T-cell (primary cell): ENCODE measurements at regions of chr5 and their contacts with region 1.

Region 1: DNA sequence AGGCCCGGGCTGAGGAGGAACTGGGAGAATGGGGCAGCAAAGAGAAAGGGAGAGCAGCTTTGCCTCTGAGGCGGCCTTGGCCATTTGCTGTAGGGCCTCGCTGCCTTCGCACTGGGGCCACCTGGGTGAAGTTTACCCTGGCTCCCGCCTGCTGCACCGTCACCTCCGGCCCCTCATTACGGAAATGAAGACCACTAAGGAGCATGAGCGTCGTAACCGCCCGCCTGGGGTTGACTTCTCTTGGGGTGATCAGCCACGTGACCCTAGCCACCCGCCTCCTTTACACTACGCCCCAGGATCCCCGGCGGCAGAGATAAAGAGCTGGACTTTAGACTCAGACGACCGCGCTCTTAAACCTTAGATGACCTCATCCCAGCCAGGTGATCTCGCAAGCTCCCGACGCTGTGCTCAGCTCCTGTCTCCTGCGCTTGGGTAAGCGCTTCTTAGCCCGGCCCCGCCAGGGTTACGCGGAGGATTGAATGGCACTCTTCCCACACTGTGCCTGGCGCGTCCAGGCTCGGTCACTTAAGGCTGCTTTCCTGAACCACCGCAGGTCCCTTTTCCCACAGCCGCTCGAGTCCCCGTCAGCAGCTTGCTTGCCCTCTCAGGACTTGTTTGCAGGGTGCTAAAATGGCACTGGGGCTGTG is 107.9 kb upstream of the LARP1 start:
- DNase-seq: peak in 23 of 35 experiments; percentile 1 to 41 (median 9)
- ATAC-seq: peak; percentile 52 to 76 (median 70)
- H3K4me3 ChIP-seq: peak overlapping the region; percentile 39 to 86
- H3K4me3 Mint-ChIP-seq: peak overlapping the region; percentile 71 to 78 (median 77)
- H3K27ac ChIP-seq: no peak overlapping the region
- H3K27ac Mint-ChIP-seq: peak overlapping the region in 1 of 2 donors; percentile 34
- H3K4me1 ChIP-seq: peaks cover 0 to 15% of the 10 kb centered on the region in 2 experiments
- H3K4me1 Mint-ChIP-seq: peaks cover 15 to 18% (median 18%) of the 10 kb centered on the region in 3 donors
- H3K27me3 ChIP-seq: peaks cover 2 to 26% of the 10 kb centered on the region in 2 experiments
- H3K27me3 Mint-ChIP-seq: peaks cover 19 to 32% of the 10 kb centered on the region in 2 donors

Region 2: DNA sequence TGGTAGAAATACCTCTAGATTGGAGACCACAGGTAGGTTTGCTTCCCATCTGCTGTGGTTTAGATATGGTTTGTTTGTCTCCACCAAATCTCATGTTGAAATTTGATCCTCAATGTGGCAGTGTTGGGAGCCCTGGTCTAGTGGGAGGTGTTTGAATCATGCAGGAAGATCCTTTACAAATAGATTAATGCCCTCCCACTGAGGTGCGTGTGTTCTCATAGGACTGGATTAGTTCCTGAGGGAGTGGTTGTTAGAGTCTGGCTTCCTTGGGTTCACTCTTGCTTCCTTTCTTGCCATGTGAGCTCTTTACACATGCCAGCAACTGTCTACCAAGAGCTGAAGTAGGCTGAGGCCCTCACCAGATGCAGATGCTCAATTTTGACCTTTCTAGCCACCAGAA is 1547.9 kb before region 1 on chr5:
- CTCF ChIA-PET with region 1: no interaction called
- POLR2A ChIA-PET with region 1: no interaction called
- DNase-seq: no peak
- ATAC-seq: no peak
- H3K4me3 ChIP-seq: no peak overlapping the region
- H3K4me3 Mint-ChIP-seq: no peak overlapping the region
- H3K27ac ChIP-seq: no peak overlapping the region
- H3K27ac Mint-ChIP-seq: no peak overlapping the region
- H3K4me1 ChIP-seq: no peaks in the 10 kb centered on the region
- H3K4me1 Mint-ChIP-seq: no peaks in the 10 kb centered on the region
- H3K27me3 ChIP-seq: no peaks in the 10 kb centered on the region
- H3K27me3 Mint-ChIP-seq: no peaks in the 10 kb centered on the region

Region 3: GRCh38 chr5:154368041-154368800 is 279.0 kb before region 1 on chr5:
- CTCF ChIA-PET with region 1: no interaction called
- POLR2A ChIA-PET with region 1: no interaction called
- DNase-seq: no peak
- ATAC-seq: no peak
- H3K4me3 ChIP-seq: no peak overlapping the region
- H3K4me3 Mint-ChIP-seq: no peak overlapping the region
- H3K27ac ChIP-seq: no peak overlapping the region
- H3K27ac Mint-ChIP-seq: no peak overlapping the region
- H3K4me1 ChIP-seq: no peaks in the 10 kb centered on the region
- H3K4me1 Mint-ChIP-seq: no peaks in the 10 kb centered on the region
- H3K27me3 ChIP-seq: no peaks in the 10 kb centered on the region
- H3K27me3 Mint-ChIP-seq: no peaks in the 10 kb centered on the region

Region 4: DNA sequence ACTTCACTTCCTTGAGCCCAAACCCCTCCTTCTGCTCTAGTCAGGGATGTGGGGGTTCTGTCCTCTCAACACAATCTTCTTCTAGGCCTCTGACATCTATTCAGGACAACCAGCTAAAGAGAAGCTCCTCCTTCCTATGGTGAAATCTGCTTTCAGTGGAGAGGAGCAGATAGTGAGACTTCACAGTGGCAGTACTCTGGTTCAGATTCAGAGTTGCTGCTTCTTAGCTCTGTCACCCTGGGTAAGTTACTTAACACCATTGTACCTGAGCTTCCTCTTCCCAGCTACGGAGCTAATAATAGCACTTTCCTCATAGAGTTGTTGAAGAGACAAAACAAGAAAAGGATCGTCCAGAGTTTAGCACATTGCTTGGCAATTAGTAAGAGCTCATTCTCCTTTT is 30.7 kb after region 1 on chr5:
- CTCF ChIA-PET with region 1: interaction called, 8 to 10 read pairs
- POLR2A ChIA-PET with region 1: no interaction called
- DNase-seq: no peak
- ATAC-seq: no peak
- H3K4me3 ChIP-seq: no peak overlapping the region
- H3K4me3 Mint-ChIP-seq: no peak overlapping the region
- H3K27ac ChIP-seq: no peak overlapping the region
- H3K27ac Mint-ChIP-seq: no peak overlapping the region
- H3K4me1 ChIP-seq: peaks cover 0 to 7% of the 10 kb centered on the region in 2 experiments
- H3K4me1 Mint-ChIP-seq: peaks cover 0 to 3% (median 1%) of the 10 kb centered on the region in 3 donors
- H3K27me3 ChIP-seq: no peaks in the 10 kb centered on the region
- H3K27me3 Mint-ChIP-seq: no peaks in the 10 kb centered on the region

Region 5: DNA sequence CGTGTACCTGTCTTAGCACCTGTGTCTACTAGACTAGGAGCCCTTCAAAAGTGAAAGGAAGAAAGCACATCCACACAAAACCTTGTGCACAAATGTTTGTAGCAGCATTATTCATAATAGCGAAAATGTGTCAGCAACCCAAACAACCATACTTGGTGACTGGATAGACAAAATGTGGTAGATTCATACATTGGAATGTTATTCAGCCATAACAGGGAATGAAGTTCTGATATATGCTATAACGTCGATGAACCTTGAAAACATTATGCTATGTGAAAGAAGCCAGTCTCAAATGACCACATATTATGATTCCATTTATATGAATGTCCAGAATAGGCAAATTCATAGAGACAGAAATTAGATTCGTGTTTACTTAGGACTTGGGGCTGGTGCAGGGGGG is 50.1 kb after region 1 on chr5:
- CTCF ChIA-PET with region 1: no interaction called
- POLR2A ChIA-PET with region 1: no interaction called
- DNase-seq: no peak
- ATAC-seq: no peak
- H3K4me3 ChIP-seq: no peak overlapping the region
- H3K4me3 Mint-ChIP-seq: no peak overlapping the region
- H3K27ac ChIP-seq: no peak overlapping the region
- H3K27ac Mint-ChIP-seq: no peak overlapping the region
- H3K4me1 ChIP-seq: no peaks in the 10 kb centered on the region
- H3K4me1 Mint-ChIP-seq: peaks cover 0 to 3% (median 0%) of the 10 kb centered on the region in 3 donors
- H3K27me3 ChIP-seq: peaks cover 0 to 4% of the 10 kb centered on the region in 2 experiments
- H3K27me3 Mint-ChIP-seq: peaks cover 6 to 11% of the 10 kb centered on the region in 2 donors

Region 6: GRCh38 chr5:154811653-154812365 is 164.6 kb after region 1 on chr5:
- CTCF ChIA-PET with region 1: interaction called, 3 to 11 read pairs
- POLR2A ChIA-PET with region 1: interaction called in 1 of 2 experiments, 4 read pairs
- DNase-seq: peak; percentile 14 to 81 (median 57)
- ATAC-seq: peak; percentile 58 to 64 (median 60)
- H3K4me3 ChIP-seq: no peak overlapping the region
- H3K4me3 Mint-ChIP-seq: peak overlapping the region in 1 of 3 donors; percentile 46
- H3K27ac ChIP-seq: peak overlapping the region; percentile 10
- H3K27ac Mint-ChIP-seq: peak overlapping the region in 1 of 2 donors; percentile 85
- H3K4me1 ChIP-seq: peaks cover 8 to 21% of the 10 kb centered on the region in 2 experiments
- H3K4me1 Mint-ChIP-seq: peaks cover 32 to 37% (median 33%) of the 10 kb centered on the region in 3 donors
- H3K27me3 ChIP-seq: no peaks in the 10 kb centered on the region
- H3K27me3 Mint-ChIP-seq: no peaks in the 10 kb centered on the region

Region 7: DNA sequence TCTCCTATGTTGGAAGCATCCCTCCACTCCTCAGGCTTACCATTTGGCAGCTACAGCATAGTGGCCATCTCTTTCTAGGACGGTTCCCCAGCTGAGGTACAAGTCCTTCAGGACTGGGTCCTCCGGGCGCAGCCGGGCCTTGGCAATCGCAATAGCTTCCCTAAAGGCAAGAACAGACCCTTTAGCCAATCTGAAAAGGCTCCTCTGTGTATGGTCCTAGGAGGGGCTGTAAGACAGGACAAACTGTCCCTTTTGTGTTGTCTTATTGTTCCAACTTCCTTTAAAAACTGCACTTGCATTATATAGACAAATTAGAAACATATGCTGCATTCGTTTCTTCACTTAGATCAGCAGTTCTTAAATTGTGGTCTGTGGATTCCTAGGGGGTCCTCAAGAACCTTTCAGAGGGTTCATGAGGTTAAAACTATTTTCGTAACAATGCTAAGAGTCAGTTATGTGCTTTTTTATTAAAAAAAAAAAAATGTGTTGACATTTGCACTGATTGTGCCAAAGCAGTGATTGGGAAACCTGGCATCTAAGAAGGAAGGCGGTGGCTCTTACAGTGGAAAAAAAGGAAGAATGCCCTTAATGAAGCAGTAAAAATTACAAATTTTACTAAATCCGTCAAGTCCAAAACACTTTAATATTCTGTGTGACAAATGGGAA is 252.0 kb after region 1 on chr5:
- CTCF ChIA-PET with region 1: no interaction called
- POLR2A ChIA-PET with region 1: no interaction called
- DNase-seq: no peak
- ATAC-seq: no peak
- H3K4me3 ChIP-seq: no peak overlapping the region
- H3K4me3 Mint-ChIP-seq: no peak overlapping the region
- H3K27ac ChIP-seq: no peak overlapping the region
- H3K27ac Mint-ChIP-seq: no peak overlapping the region
- H3K4me1 ChIP-seq: no peaks in the 10 kb centered on the region
- H3K4me1 Mint-ChIP-seq: no peaks in the 10 kb centered on the region
- H3K27me3 ChIP-seq: no peaks in the 10 kb centered on the region
- H3K27me3 Mint-ChIP-seq: no peaks in the 10 kb centered on the region